ENCODE measurements at regions of chr1 and their contacts with region 1.

Region 1: DNA sequence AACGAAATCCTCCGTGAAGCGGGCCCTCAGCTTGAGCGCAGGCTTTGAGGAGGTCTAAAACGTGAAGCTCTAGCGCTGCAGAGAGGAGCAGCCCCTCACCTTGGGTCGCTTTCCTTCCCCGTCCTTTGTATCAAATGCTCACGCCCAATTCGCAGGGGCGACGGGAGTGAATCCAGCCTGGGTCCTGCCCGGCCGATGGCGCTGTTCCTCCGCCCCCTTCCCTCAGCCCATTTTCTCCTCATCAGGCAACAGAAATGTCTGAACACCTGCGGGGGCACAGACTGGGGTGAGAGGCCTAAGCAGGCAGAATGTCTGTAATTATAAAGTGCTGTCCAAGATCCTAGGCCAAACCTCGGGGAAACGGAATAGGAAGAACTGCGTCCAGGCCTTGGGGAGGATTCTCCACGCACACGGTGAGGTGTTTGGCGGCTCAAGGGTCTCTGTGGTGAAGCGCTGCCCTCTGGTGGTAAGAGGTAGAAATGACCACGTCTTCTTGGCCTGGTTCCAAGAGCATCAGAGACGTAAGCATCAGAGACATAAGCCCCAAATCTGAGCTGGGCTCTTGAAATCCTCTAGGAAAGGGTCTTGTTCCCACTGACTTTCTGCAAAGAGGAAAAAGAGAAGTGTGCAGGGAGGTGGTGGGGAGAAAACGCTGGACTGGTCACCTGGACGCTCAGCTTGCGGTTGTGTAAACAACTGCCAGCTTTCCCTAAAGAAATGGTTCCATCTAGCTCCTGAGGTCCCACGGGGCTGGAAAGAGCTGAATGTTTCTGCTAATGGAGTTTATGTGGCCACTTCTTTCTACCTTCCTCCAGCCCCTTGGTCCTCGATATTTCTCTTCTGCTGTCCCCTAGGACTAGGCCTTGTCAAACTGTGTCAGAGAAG is 92.1 kb upstream of the CD53 start:
- DNase-seq: peak; percentile 91
- ATAC-seq: peak; percentile 76
- H3K4me3 ChIP-seq: peak overlapping the region in 1 of 5 experiments; percentile 11
- H3K4me3 Mint-ChIP-seq: peak overlapping the region; percentile 52
- H3K27ac ChIP-seq: no peak overlapping the region
- H3K27ac Mint-ChIP-seq: peak overlapping the region; percentile 65
- H3K4me1 ChIP-seq: peaks cover 38 to 40% of the 10 kb centered on the region in 2 donors
- H3K4me1 Mint-ChIP-seq: peaks cover 42% of the 10 kb centered on the region
- H3K27me3 ChIP-seq: peaks cover 0 to 3% (median 0%) of the 10 kb centered on the region in 4 experiments
- H3K27me3 Mint-ChIP-seq: peaks cover 8% of the 10 kb centered on the region
- CTCF ChIP-seq: peak; percentile 86

Region 2: GRCh38 chr1:110384581-110385321 is 396.1 kb before region 1 on chr1:
- CTCF ChIA-PET with region 1: interaction called, 3 read pairs
- POLR2A ChIA-PET with region 1: no interaction called
- intact Hi-C with region 1: loop called (anchors 10 kb)
- DNase-seq: peak; percentile 91
- ATAC-seq: peak; percentile 77
- H3K4me3 ChIP-seq: peak overlapping the region; percentile 34 to 49 (median 42)
- H3K4me3 Mint-ChIP-seq: peak overlapping the region; percentile 78
- H3K27ac ChIP-seq: peak overlapping the region; percentile 87 to 98
- H3K27ac Mint-ChIP-seq: peak overlapping the region; percentile 90
- H3K4me1 ChIP-seq: peaks cover 61 to 79% of the 10 kb centered on the region in 2 donors
- H3K4me1 Mint-ChIP-seq: peaks cover 76% of the 10 kb centered on the region
- H3K27me3 ChIP-seq: no peaks in the 10 kb centered on the region
- H3K27me3 Mint-ChIP-seq: no peaks in the 10 kb centered on the region
- CTCF ChIP-seq: no peak

Region 3: DNA sequence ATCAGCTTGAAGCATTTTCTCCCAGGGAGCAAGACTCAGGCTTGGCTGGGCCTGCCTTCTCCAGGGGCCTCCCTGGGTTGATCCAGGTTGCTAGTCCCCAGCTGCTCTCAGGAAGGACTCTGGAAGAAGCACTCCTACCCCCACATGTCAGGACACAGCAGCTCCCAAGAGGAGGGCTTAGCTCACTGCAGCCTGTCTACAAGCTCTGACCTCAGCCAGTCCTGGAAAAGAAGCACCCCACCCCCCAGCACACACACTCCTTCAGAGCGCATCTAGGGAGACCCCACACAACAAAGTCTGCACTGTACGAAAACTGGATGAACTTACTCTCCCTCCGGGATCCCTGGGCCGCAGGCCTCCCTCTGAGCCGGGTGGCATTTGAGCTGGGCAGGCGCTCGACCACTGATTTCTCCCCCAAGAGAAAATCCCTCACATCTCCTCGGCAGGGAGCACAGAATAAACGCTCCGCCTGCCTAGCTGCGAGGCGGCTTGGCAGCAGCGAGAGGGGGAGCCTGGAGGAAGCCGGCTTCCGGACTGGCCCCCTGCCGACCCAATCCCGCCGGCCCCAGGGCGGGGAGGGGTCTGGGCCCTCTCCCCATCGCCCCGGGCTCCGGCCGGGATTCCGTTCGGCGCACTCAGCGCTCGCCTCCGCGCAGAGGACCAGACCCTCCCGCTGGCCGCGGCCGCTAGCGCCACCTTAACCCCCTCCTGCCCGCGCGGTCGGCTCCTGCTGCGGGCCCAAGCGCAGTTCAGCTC is 174.8 kb before region 1 on chr1 and contains the start of gene KCNA2:
- CTCF ChIA-PET with region 1: interaction called, 20 read pairs
- POLR2A ChIA-PET with region 1: no interaction called
- intact Hi-C with region 1: no loop called
- DNase-seq: no peak
- ATAC-seq: peak; percentile 23
- H3K4me3 ChIP-seq: peak within 1 kb of the TSS; percentile 8 to 71 (median 50)
- H3K4me3 Mint-ChIP-seq: peak within 1 kb of the TSS; percentile 88
- H3K27ac ChIP-seq: no peak within 1 kb of the TSS
- H3K27ac Mint-ChIP-seq: no peak within 1 kb of the TSS
- H3K4me1 ChIP-seq: peaks cover 23 to 28% of the 10 kb centered on the region in 2 donors
- H3K4me1 Mint-ChIP-seq: peaks cover 25% of the 10 kb centered on the region
- H3K27me3 ChIP-seq: peaks cover 0 to 59% (median 37%) of the 10 kb centered on the region in 4 experiments
- H3K27me3 Mint-ChIP-seq: peaks cover 62% of the 10 kb centered on the region
- CTCF ChIP-seq: no peak
- total RNA-seq, gene KCNA2: 0.29 and 0.59 TPM in 2 replicates

Region 4: DNA sequence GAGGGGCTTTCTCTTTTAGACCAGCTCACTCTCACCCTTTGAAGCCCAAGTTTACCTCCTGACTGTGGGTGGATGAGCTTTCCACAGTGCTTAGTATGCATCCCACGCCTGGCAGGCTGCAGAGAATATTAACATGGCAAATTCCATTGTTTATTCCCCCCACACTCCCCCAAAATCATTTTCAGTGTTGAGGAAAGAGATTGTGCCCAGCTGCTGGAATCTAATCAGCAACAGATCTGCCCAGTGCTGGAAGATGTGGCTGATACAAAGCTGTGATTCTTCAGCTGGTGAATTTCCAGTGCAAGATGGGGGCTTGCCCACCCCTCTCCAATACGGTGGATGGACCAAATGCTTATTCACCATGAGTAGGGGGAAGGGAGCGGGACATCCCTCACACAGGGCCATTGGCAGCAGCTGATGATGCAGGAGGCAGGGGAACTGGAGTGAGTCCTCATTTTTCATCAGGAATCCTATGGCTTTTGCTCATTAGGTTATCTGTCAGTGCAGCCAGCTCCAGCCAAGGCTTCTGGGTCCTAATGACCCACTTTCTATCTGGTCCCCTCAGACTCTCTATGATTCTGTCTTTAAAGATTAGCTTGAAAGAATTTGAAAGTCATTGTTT is 66.4 kb before region 1 on chr1:
- CTCF ChIA-PET with region 1: no interaction called
- POLR2A ChIA-PET with region 1: no interaction called
- intact Hi-C with region 1: no loop called
- DNase-seq: no peak
- ATAC-seq: no peak
- H3K4me3 ChIP-seq: no peak overlapping the region
- H3K4me3 Mint-ChIP-seq: no peak overlapping the region
- H3K27ac ChIP-seq: no peak overlapping the region
- H3K27ac Mint-ChIP-seq: no peak overlapping the region
- H3K4me1 ChIP-seq: no peaks in the 10 kb centered on the region
- H3K4me1 Mint-ChIP-seq: peaks cover 2% of the 10 kb centered on the region
- H3K27me3 ChIP-seq: no peaks in the 10 kb centered on the region
- H3K27me3 Mint-ChIP-seq: peaks cover 5% of the 10 kb centered on the region
- CTCF ChIP-seq: no peak

Region 5: GRCh38 chr1:110766025-110766647 is 14.7 kb before region 1 on chr1:
- CTCF ChIA-PET with region 1: interaction called, 111 read pairs
- POLR2A ChIA-PET with region 1: no interaction called
- intact Hi-C with region 1: no loop called
- DNase-seq: peak; percentile 77
- ATAC-seq: peak; percentile 73
- H3K4me3 ChIP-seq: no peak overlapping the region
- H3K4me3 Mint-ChIP-seq: no peak overlapping the region
- H3K27ac ChIP-seq: no peak overlapping the region
- H3K27ac Mint-ChIP-seq: no peak overlapping the region
- H3K4me1 ChIP-seq: peaks cover 0 to 3% of the 10 kb centered on the region in 2 donors
- H3K4me1 Mint-ChIP-seq: peaks cover 2% of the 10 kb centered on the region
- H3K27me3 ChIP-seq: peaks cover 0 to 8% (median 3%) of the 10 kb centered on the region in 4 experiments
- H3K27me3 Mint-ChIP-seq: peaks cover 17% of the 10 kb centered on the region
- CTCF ChIP-seq: peak; percentile 92

Region 6: GRCh38 chr1:110963691-110964399 is 183.0 kb after region 1 on chr1 and contains the start of gene LRIF1:
- CTCF ChIA-PET with region 1: interaction called, 20 read pairs
- POLR2A ChIA-PET with region 1: interaction called, 9 read pairs
- intact Hi-C with region 1: loop called (anchors 2 kb)
- DNase-seq: peak; percentile 100
- ATAC-seq: peak; percentile 96
- H3K4me3 ChIP-seq: peak within 1 kb of the TSS; percentile 62 to 98 (median 82)
- H3K4me3 Mint-ChIP-seq: peak within 1 kb of the TSS; percentile 83
- H3K27ac ChIP-seq: peak within 1 kb of the TSS; percentile 95 to 98
- H3K27ac Mint-ChIP-seq: peak within 1 kb of the TSS; percentile 88
- H3K4me1 ChIP-seq: peaks cover 20 to 21% of the 10 kb centered on the region in 2 donors
- H3K4me1 Mint-ChIP-seq: peaks cover 30% of the 10 kb centered on the region
- H3K27me3 ChIP-seq: peaks cover 0 to 13% (median 7%) of the 10 kb centered on the region in 4 experiments
- H3K27me3 Mint-ChIP-seq: peaks cover 10% of the 10 kb centered on the region
- CTCF ChIP-seq: peak; percentile 60
- total RNA-seq, gene LRIF1: 22.6 and 26.5 TPM in 2 replicates

Region 7: GRCh38 chr1:111203681-111204200 is 422.9 kb after region 1 on chr1:
- CTCF ChIA-PET with region 1: no interaction called
- POLR2A ChIA-PET with region 1: no interaction called
- intact Hi-C with region 1: loop called (anchors 10 kb)
- DNase-seq: peak; percentile 90
- ATAC-seq: peak; percentile 56
- H3K4me3 ChIP-seq: peak overlapping the region; percentile 60 to 87 (median 83)
- H3K4me3 Mint-ChIP-seq: peak overlapping the region; percentile 91
- H3K27ac ChIP-seq: peak overlapping the region; percentile 88 to 96
- H3K27ac Mint-ChIP-seq: peak overlapping the region; percentile 96
- H3K4me1 ChIP-seq: peaks cover 58 to 75% of the 10 kb centered on the region in 2 donors
- H3K4me1 Mint-ChIP-seq: peaks cover 81% of the 10 kb centered on the region
- H3K27me3 ChIP-seq: no peaks in the 10 kb centered on the region
- H3K27me3 Mint-ChIP-seq: no peaks in the 10 kb centered on the region
- CTCF ChIP-seq: no peak